Heart left ventricle (tissue), 16 donors: ENCODE measurements at regions of chr2 and their contacts with region 1.

Region 1: GRCh38 chr2:65554765-65555591 is 122.6 kb upstream of the SPRED2 start:
- DNase-seq: no peak
- ATAC-seq: peak in 1 of 4 donors; percentile 14
- H3K4me3 ChIP-seq: no peak overlapping the region
- H3K27ac ChIP-seq: no peak overlapping the region
- H3K4me1 ChIP-seq: peaks cover 0 to 8% (median 2%) of the 10 kb centered on the region in 12 donors
- H3K27me3 ChIP-seq: no peaks in the 10 kb centered on the region
- CTCF ChIP-seq: no peak
- POLR2A ChIP-seq: no peak

Region 2: GRCh38 chr2:65256054-65256453 is 298.9 kb before region 1 on chr2:
- intact Hi-C with region 1: loop called in 1 of 10 experiments (anchors 2 kb)
- DNase-seq: no peak
- ATAC-seq: no peak
- H3K4me3 ChIP-seq: no peak overlapping the region
- H3K27ac ChIP-seq: no peak overlapping the region
- H3K4me1 ChIP-seq: no peaks in the 10 kb centered on the region
- H3K27me3 ChIP-seq: no peaks in the 10 kb centered on the region
- CTCF ChIP-seq: peak in 6 of 12 donors; percentile 9 to 37 (median 19)
- POLR2A ChIP-seq: no peak

Region 3: GRCh38 chr2:65443509-65444201 is 111.3 kb before region 1 on chr2:
- intact Hi-C with region 1: loop called in 5 of 10 experiments (anchors 5 kb)
- DNase-seq: no peak
- ATAC-seq: no peak
- H3K4me3 ChIP-seq: no peak overlapping the region
- H3K27ac ChIP-seq: no peak overlapping the region
- H3K4me1 ChIP-seq: no peaks in the 10 kb centered on the region
- H3K27me3 ChIP-seq: no peaks in the 10 kb centered on the region
- CTCF ChIP-seq: no peak
- POLR2A ChIP-seq: no peak

Region 4: GRCh38 chr2:65479524-65479923 is 75.5 kb before region 1 on chr2:
- intact Hi-C with region 1: no loop called
- DNase-seq: peak; percentile 20 to 73 (median 38)
- ATAC-seq: peak; percentile 30 to 90 (median 76)
- H3K4me3 ChIP-seq: no peak overlapping the region
- H3K27ac ChIP-seq: peak overlapping the region in 5 of 12 donors; percentile 4 to 54 (median 44)
- H3K4me1 ChIP-seq: peaks cover 0 to 15% (median 4%) of the 10 kb centered on the region in 12 donors
- H3K27me3 ChIP-seq: no peaks in the 10 kb centered on the region
- CTCF ChIP-seq: no peak
- POLR2A ChIP-seq: no peak

Region 5: DNA sequence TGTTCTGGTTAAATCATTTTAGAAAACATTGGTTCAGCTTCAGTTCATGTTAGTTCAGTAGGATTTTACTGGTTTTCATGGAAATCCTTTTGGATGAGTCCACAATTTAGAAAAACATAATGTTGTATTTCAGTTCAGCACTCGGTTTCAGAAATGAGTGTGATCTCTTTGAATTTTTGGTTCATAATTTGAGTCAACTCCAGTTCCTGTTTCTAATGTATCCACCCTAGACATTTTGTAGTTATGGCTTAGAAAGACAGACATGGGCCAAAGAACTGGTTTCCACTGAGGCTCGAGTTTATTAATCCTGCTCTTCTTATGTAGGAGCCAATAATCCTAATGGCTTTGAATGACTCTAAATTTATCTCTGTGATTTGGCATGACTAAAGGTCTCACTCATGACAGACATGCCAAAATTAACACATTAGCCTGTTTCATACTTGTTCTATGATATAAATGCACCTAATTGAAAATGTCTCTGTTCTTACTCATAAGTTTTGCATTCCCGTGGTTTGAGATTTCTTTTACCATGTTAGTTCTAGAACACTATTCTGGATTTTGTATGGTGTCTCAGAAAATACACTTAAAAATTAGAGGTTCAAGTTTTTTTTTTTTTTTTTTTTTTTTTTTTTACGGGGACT is 40.3 kb before region 1 on chr2:
- intact Hi-C with region 1: no loop called
- DNase-seq: no peak
- ATAC-seq: no peak
- H3K4me3 ChIP-seq: no peak overlapping the region
- H3K27ac ChIP-seq: no peak overlapping the region
- H3K4me1 ChIP-seq: peaks cover 0 to 6% (median 0%) of the 10 kb centered on the region in 12 donors
- H3K27me3 ChIP-seq: no peaks in the 10 kb centered on the region
- CTCF ChIP-seq: no peak
- POLR2A ChIP-seq: no peak